ENCODE measurements at regions of chr11 and their contacts with region 1.

Region 1: DNA sequence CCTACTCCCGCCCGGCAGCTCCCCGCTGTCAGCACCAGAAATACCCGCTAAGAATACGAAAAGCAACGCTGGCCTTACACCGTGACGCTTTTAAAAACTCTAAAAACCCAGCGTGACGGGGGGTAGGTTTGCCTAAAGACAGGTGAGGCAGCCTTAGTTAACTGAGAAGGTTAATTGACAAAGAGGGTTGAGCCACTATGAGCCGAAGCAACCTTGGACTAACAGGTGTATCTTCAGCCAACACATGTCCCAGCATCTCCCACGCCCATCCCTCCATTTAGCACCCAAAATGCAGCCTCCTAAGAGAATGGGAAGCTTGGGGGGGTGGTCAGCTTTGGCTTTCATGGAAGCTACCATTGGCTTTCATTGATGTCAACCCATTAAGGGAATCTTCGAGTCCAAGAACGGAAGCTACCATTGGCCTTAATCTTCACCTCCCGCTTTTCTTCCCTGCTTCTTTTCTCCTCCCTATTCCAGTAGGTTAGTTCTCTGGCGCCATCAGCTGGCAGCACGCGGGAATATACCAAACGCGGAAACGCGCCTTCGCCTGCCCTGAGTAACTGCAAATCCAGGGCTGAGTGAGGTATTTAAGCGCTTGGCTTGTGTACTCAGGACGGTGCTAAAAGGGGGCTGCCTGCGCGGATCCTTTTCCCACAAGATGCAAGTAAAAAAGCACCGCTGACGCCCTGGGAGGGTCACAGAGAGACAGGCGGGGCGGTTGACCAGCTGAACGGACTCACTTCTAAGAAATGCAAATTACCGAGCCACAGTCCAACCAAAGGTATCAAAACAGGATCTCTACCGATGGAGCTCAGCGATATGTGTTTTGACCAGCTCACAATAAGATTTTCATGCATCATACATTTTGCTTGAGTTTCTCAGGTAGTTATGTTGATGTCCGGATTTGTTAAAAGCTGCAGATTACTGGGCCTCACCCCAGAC is 38.5 kb upstream of the GLYATL1 start:
- DNase-seq: peak; percentile 85
- H3K4me3 Mint-ChIP-seq: peak overlapping the region; percentile 22
- H3K27ac Mint-ChIP-seq: no peak overlapping the region
- H3K4me1 Mint-ChIP-seq: no peaks in the 10 kb centered on the region
- H3K27me3 Mint-ChIP-seq: peaks cover 41% of the 10 kb centered on the region
- CTCF ChIP-seq: peak; percentile 60

Region 2: DNA sequence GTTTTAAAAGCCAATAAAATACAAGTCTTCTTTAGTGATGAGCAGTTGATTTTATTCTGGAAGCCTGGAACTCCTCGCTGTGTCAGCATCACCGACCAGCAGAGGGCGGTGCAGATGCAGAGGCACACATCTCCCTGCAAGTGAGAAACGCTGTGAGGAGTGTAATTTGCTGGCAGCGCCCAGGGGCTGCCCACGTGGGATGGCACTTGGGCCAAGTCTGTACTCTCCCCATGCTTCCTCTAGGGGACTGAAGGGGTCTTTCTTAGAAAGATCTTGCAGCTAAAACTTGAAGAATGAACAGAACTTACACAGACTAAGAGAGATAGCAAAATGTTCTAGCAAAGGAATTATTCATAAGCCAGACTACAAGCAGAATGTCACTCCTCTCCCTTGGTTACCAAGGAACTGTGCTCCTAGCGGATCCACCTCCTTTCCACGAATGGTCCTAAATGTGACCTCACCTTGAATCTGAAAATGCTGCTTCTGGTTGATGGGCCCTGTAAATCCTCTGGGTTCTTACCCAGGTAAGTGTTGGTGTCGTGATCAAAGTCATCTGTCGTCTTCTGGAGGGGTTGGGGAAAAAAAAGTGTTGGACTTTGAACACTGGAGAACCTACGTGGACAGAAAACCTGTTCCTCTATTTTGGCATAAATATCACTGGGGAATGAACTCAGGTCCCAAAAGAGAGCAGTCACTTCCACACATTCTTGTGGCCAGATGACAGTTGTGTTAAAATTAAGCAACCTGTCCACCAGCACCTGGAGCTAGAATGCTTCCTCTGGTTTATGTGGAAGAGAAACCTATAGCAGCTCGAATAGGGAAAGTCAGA is 246.5 kb before region 1 on chr11:
- CTCF ChIA-PET with region 1: interaction called, 3 read pairs
- intact Hi-C with region 1: loop called (anchors 1 kb)
- DNase-seq: peak; percentile 88
- H3K4me3 Mint-ChIP-seq: no peak overlapping the region
- H3K27ac Mint-ChIP-seq: no peak overlapping the region
- H3K4me1 Mint-ChIP-seq: peaks cover 31% of the 10 kb centered on the region
- H3K27me3 Mint-ChIP-seq: no peaks in the 10 kb centered on the region
- CTCF ChIP-seq: peak; percentile 81

Region 3: GRCh38 chr11:58719406-58720117 is 181.2 kb before region 1 on chr11:
- CTCF ChIA-PET with region 1: no interaction called
- intact Hi-C with region 1: loop called (anchors 10 kb)
- DNase-seq: no peak
- H3K4me3 Mint-ChIP-seq: no peak overlapping the region
- H3K27ac Mint-ChIP-seq: no peak overlapping the region
- H3K4me1 Mint-ChIP-seq: no peaks in the 10 kb centered on the region
- H3K27me3 Mint-ChIP-seq: no peaks in the 10 kb centered on the region
- CTCF ChIP-seq: no peak

Region 4: GRCh38 chr11:58829786-58830185 is 71.0 kb before region 1 on chr11:
- CTCF ChIA-PET with region 1: interaction called, 11 read pairs
- intact Hi-C with region 1: no loop called
- DNase-seq: peak; percentile 10
- H3K4me3 Mint-ChIP-seq: peak overlapping the region; percentile 64
- H3K27ac Mint-ChIP-seq: no peak overlapping the region
- H3K4me1 Mint-ChIP-seq: peaks cover 13% of the 10 kb centered on the region
- H3K27me3 Mint-ChIP-seq: no peaks in the 10 kb centered on the region
- CTCF ChIP-seq: no peak

Region 5: GRCh38 chr11:58923300-58923788 is 22.6 kb after region 1 on chr11:
- CTCF ChIA-PET with region 1: no interaction called
- intact Hi-C with region 1: no loop called
- DNase-seq: no peak
- H3K4me3 Mint-ChIP-seq: peak overlapping the region; percentile 59
- H3K27ac Mint-ChIP-seq: no peak overlapping the region
- H3K4me1 Mint-ChIP-seq: peaks cover 17% of the 10 kb centered on the region
- H3K27me3 Mint-ChIP-seq: no peaks in the 10 kb centered on the region
- CTCF ChIP-seq: no peak

Region 6: DNA sequence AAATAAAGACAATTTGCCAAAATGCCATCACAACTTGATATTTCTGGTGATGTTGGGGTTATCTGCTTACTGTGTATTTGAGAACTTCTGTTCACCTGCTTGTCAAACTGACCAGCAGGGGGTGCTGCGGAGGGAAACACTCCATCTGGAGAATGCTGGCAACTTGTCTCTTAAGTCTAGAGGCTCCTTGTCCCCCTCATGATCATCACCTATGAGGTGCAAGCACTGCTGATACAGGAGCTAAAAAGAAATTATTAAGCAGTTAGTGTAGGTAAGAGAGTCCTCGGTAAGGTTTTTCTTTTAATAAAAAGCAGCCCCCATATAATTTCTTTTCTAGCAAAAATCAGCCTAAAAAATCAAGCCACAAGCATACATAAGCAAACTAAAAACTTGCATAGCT is 152.6 kb after region 1 on chr11:
- CTCF ChIA-PET with region 1: interaction called, 12 read pairs
- intact Hi-C with region 1: no loop called
- DNase-seq: peak; percentile 80
- H3K4me3 Mint-ChIP-seq: no peak overlapping the region
- H3K27ac Mint-ChIP-seq: no peak overlapping the region
- H3K4me1 Mint-ChIP-seq: no peaks in the 10 kb centered on the region
- H3K27me3 Mint-ChIP-seq: peaks cover 39% of the 10 kb centered on the region
- CTCF ChIP-seq: peak; percentile 55